K562 (cell line): ENCODE measurements at regions of chr21 and their contacts with region 1.

Region 1: GRCh38 chr21:45140346-45140940 is 66.1 kb downstream of the ADARB1 start:
- DNase-seq: peak; percentile 82 to 91 (median 84)
- ATAC-seq: peak; percentile 95
- H3K4me3 ChIP-seq: no peak overlapping the region
- H3K27ac ChIP-seq: no peak overlapping the region
- H3K4me1 ChIP-seq: peaks cover 19 to 23% of the 10 kb centered on the region in 2 experiments; a peak in 4 of 5 replicates
- H3K27me3 ChIP-seq: no peaks in the 10 kb centered on the region; a peak in 1 of 5 replicates
- CTCF ChIP-seq: peak; percentile 98 to 99 (median 99)
- EP300 ChIP-seq: 0 out of 2 replicates have a peak, but pooled peaks have one; percentile 31
- POLR2A ChIP-seq: no peak
- RAD21 ChIP-seq: peak; percentile 92 to 96

Region 2: DNA sequence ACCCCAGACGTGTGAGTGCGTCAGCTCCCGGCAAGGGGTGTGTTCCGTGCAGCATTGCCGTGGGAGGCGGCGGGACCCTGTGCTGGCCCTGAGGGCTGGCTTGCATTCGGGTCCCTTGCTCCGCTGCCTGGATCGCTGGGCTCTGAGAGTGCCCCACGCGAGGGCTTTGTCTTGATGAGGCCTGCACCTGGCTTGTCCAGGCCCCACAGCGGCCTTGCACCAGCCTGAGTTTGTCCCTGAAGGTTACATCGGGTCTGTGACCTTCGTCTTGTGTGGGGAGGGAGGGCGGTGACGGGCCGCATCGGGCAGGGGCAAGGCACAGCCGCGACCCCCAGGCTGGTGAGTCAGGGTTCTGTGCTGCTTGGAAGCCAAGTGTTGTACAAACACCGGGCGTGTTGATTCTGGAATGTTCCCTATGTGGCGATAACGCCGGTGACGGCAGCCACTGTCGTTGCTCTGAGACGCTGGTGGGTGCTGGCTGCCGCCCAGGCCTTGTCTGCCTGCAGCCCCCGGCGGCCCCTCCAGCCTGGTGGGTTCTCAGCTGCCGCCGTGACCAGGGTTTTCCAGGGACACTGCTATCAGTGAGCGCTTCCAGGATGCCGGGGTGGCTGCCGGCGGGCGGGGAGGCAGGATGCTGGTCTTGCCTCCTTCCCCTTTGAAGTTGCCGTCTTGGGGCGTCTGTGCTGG is 157.7 kb before region 1 on chr21:
- CTCF ChIA-PET with region 1: no interaction called
- POLR2A ChIA-PET with region 1: no interaction called
- in situ Hi-C with region 1: no loop called
- intact Hi-C with region 1: no loop called
- DNase-seq: no peak
- ATAC-seq: no peak
- H3K4me3 ChIP-seq: no peak overlapping the region
- H3K27ac ChIP-seq: no peak overlapping the region
- H3K4me1 ChIP-seq: peaks cover 0 to 70% of the 10 kb centered on the region in 2 experiments; a peak in 1 of 5 replicates
- H3K27me3 ChIP-seq: peaks cover 0 to 9% of the 10 kb centered on the region in 2 experiments; a peak in 2 of 5 replicates
- CTCF ChIP-seq: no peak
- EP300 ChIP-seq: no peak
- POLR2A ChIP-seq: no peak
- RAD21 ChIP-seq: no peak

Region 3: DNA sequence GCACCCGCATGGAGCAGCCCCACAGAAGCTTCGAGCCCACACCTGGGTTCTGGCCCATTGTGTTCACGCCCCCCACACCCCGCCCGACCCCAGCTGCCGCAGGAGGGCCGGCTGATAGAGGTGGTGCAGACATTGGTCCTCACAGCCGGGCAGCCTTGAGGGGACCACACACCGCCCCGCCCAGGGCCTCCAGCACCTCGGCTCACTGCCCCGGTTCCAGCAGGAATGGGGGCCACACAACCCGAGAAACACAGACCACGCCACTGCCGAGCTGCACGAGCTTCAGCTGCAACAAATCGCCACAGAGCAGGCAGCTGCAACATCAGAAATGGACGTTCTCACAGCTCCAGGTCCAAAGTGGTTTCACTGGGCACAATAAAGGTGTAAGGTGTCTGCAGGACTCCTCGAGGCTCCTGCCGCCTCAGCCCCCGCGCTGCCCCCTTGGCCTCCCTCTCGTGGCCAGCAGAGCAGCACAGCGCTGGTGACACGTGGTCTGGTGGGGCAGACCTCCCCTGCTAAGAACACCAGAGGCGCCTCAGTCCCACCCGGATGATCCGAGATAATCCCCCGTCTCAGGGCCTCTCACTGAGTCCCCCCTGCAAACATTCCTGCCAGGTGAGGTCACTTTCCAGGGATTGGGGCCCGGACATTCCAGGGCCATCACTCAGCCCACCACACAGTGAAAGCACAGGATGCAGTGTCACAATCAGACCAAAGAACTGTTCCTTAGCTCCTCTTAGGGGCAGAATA is 128.4 kb before region 1 on chr21:
- CTCF ChIA-PET with region 1: no interaction called
- POLR2A ChIA-PET with region 1: no interaction called
- in situ Hi-C with region 1: no loop called
- intact Hi-C with region 1: loop called (anchors 10 kb)
- DNase-seq: no peak
- ATAC-seq: peak; percentile 31
- H3K4me3 ChIP-seq: no peak overlapping the region
- H3K27ac ChIP-seq: no peak overlapping the region
- H3K4me1 ChIP-seq: peaks cover 0 to 31% of the 10 kb centered on the region in 2 experiments; a peak in 2 of 5 replicates
- H3K27me3 ChIP-seq: peaks cover 67 to 70% of the 10 kb centered on the region in 2 experiments
- CTCF ChIP-seq: peak in 2 of 3 experiments; percentile 22 to 25; a peak in 1 of 6 replicates
- EP300 ChIP-seq: no peak
- POLR2A ChIP-seq: no peak
- RAD21 ChIP-seq: no peak

Region 4: GRCh38 chr21:45098867-45099266 is 41.6 kb before region 1 on chr21:
- CTCF ChIA-PET with region 1: interaction called, 11 read pairs
- POLR2A ChIA-PET with region 1: no interaction called
- in situ Hi-C with region 1: no loop called
- intact Hi-C with region 1: loop called (anchors 1 kb)
- DNase-seq: peak; percentile 46 to 51 (median 46)
- ATAC-seq: peak; percentile 82
- H3K4me3 ChIP-seq: no peak overlapping the region
- H3K27ac ChIP-seq: no peak overlapping the region
- H3K4me1 ChIP-seq: peaks cover 6 to 13% of the 10 kb centered on the region in 2 experiments
- H3K27me3 ChIP-seq: peaks cover 0 to 4% of the 10 kb centered on the region in 2 experiments; a peak in 2 of 5 replicates
- CTCF ChIP-seq: peak; percentile 65 to 68 (median 67)
- EP300 ChIP-seq: no peak
- POLR2A ChIP-seq: no peak
- RAD21 ChIP-seq: peak; percentile 6 to 59; a peak in 2 of 4 replicates

Region 5: DNA sequence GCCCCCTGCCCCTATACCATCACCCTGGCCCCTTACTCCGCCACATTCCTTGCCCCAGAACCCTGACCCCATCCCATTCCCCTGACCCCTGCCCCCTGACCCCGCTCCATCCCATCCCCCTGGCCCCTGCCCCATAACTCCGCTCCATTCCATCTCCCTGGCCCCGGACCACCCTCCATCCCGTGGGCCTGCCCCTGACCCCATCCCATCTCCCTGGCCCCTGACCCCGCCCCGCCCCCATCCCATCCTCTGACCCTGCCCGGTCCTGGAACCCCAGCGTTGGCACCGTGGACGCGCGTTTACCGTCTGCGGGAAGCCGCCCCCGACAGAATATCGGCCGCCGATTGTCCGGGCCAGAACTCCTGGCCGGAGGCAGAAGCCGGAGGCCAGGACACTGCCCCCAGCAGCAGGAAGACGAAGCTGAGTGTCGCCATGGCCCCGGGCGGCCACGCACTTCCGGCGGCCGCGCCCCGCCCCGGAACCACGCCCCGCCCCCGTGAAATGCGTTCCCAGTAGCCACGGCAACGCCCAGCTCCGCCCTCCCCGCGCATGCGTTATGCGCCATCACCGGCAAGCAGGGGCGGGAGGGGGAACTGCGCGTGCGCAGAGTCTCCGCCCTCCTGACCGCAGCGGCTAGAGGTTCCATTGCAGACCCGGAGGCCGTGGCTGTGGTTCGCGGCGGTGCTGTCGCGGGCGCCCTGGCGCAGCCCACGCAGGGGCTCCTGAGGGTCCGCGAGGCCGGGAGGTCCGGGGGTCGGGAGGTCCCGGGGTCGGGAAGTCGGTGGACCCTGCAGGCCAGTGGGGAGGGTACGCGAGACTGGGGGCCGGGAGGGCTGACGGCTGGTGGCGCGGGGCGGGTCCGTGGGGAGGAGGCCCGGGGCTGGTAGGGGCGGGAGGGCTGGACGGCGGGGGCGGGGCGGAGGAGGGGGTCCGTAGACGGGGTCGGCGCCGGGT is 147.3 kb after region 1 on chr21 and contains the start of gene POFUT2:
- CTCF ChIA-PET with region 1: interaction called, 12 read pairs
- POLR2A ChIA-PET with region 1: interaction called, 6 read pairs
- in situ Hi-C with region 1: loop called (anchors 5 kb)
- intact Hi-C with region 1: loop called (anchors 1 kb)
- DNase-seq: peak; percentile 98 to 100 (median 100)
- ATAC-seq: peak; percentile 89
- H3K4me3 ChIP-seq: peak within 1 kb of the TSS; percentile 92
- H3K27ac ChIP-seq: peak within 1 kb of the TSS; percentile 68; the same call in 2 of the 3 replicates
- H3K4me1 ChIP-seq: peaks cover 12 to 36% of the 10 kb centered on the region in 2 experiments; a peak in 4 of 5 replicates
- H3K27me3 ChIP-seq: no peaks in the 10 kb centered on the region
- CTCF ChIP-seq: peak in 1 of 3 experiments; percentile 8; a peak in 1 of 6 replicates
- EP300 ChIP-seq: no peak
- POLR2A ChIP-seq: peak; percentile 83
- RAD21 ChIP-seq: no peak
- polyA plus RNA-seq, gene POFUT2: 1.1 to 2.9 TPM

Region 6: GRCh38 chr21:45439161-45439872 is 298.9 kb after region 1 on chr21:
- CTCF ChIA-PET with region 1: interaction called, 43 read pairs
- POLR2A ChIA-PET with region 1: no interaction called
- in situ Hi-C with region 1: no loop called
- intact Hi-C with region 1: no loop called
- DNase-seq: peak; percentile 90 to 91 (median 90)
- ATAC-seq: peak; percentile 98
- H3K4me3 ChIP-seq: no peak overlapping the region
- H3K27ac ChIP-seq: peak overlapping the region; percentile 55; the same call in 2 of the 3 replicates
- H3K4me1 ChIP-seq: peaks cover 10 to 61% of the 10 kb centered on the region in 2 experiments; a peak in 4 of 5 replicates
- H3K27me3 ChIP-seq: peaks cover 0 to 7% of the 10 kb centered on the region in 2 experiments; a peak in 2 of 5 replicates
- CTCF ChIP-seq: peak; percentile 97 to 98 (median 98)
- EP300 ChIP-seq: no peak
- POLR2A ChIP-seq: no peak
- RAD21 ChIP-seq: peak; percentile 100